Endothelial cell of umbilical vein (primary cell): ENCODE measurements at regions of chr11 and their contacts with region 1.

Region 1: DNA sequence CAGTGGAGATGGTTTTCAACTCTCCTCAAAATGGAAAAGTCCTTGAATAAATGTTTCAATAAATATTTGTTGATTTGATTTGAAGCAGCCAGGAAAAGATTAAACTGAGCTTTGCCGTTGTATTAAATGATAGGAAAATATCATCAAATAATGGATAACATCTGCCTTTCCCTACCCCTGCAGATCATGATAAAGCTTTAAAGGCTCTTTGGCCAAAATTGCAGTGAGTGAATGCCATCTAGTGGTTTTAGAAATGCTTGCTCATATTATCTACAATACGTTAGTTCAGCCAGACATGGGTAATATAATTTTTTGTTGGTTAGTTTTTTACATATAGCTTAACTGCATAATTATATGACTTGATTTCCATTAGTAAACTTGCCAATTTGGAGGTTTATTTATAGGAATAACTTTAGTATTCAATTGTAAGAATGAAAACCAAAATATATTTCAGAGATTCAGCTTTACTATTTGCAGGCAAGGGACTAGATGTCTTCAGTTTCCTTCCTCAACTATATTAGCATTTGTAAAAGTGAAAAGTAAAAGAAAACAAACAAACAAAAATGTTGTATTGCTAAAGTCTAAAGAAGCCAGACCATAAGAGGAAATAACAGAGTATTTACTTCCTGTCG is 159.2 kb downstream of the MSANTD4 start:
- DNase-seq: peak; percentile 73
- H3K4me3 ChIP-seq: no peak overlapping the region
- H3K27ac ChIP-seq: no peak overlapping the region
- H3K4me1 ChIP-seq: no peaks in the 10 kb centered on the region
- H3K27me3 ChIP-seq: peaks cover 0 to 2% of the 10 kb centered on the region in 2 experiments
- CTCF ChIP-seq: peak; percentile 39 to 49
- POLR2A ChIP-seq: no peak

Region 2: DNA sequence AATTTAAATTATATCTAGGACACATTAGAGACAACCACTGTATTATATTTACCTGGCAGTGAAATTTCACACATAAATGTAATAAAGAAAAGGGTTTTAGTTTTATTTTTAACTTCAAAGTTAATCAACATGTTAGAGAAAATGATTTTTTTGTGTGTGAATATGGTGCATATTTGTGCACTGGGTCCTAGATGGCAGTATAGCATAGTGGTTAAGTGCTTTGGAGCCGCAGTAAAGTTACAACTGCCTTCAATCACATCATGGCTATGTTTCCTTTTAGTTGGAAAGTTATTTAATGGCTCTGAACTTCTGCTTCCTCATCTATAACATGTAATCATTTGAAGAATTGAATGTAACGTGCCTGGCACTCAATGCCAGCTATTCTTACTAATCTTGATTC is 1935.3 kb before region 1 on chr11:
- CTCF ChIA-PET with region 1: no interaction called
- POLR2A ChIA-PET with region 1: no interaction called
- dilution Hi-C with region 1: no loop called
- intact Hi-C with region 1: loop called (anchors 10 kb)
- DNase-seq: no peak
- H3K4me3 ChIP-seq: no peak overlapping the region
- H3K27ac ChIP-seq: no peak overlapping the region
- H3K4me1 ChIP-seq: no peaks in the 10 kb centered on the region
- H3K27me3 ChIP-seq: no peaks in the 10 kb centered on the region
- CTCF ChIP-seq: no peak
- POLR2A ChIP-seq: no peak

Region 3: GRCh38 chr11:104254347-104254746 is 1608.5 kb before region 1 on chr11:
- CTCF ChIA-PET with region 1: interaction called, 28 read pairs
- POLR2A ChIA-PET with region 1: no interaction called
- dilution Hi-C with region 1: no loop called
- intact Hi-C with region 1: loop called (anchors 2 kb)
- DNase-seq: peak; percentile 23
- H3K4me3 ChIP-seq: no peak overlapping the region
- H3K27ac ChIP-seq: no peak overlapping the region
- H3K4me1 ChIP-seq: no peaks in the 10 kb centered on the region
- H3K27me3 ChIP-seq: no peaks in the 10 kb centered on the region
- CTCF ChIP-seq: peak; percentile 52 to 62
- POLR2A ChIP-seq: no peak

Region 4: GRCh38 chr11:104823638-104824037 is 1039.2 kb before region 1 on chr11:
- CTCF ChIA-PET with region 1: interaction called, 8 read pairs
- POLR2A ChIA-PET with region 1: no interaction called
- dilution Hi-C with region 1: no loop called
- intact Hi-C with region 1: loop called (anchors 10 kb)
- DNase-seq: peak; percentile 22
- H3K4me3 ChIP-seq: no peak overlapping the region
- H3K27ac ChIP-seq: no peak overlapping the region
- H3K4me1 ChIP-seq: peaks cover 2% of the 10 kb centered on the region
- H3K27me3 ChIP-seq: no peaks in the 10 kb centered on the region
- CTCF ChIP-seq: no peak
- POLR2A ChIP-seq: no peak

Region 5: DNA sequence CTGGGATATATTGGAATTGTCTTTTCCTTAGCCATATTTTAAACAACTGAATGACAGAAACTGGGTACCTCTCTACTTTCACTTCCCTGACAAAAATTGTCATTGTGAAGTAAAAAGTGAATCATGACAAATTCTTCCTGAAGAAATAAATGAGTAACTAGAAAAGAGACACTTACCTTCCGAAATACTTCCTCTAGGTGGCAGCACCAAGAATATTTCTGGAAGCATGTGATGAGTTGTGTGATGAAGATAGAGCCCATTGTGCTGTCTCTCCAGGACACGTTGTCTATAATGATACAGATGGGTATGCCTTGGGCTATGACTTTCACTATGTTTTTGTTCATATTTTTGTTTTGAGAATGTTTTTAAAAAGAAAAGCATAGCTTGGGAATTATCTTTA is 915.9 kb before region 1 on chr11:
- CTCF ChIA-PET with region 1: interaction called, 35 read pairs
- POLR2A ChIA-PET with region 1: no interaction called
- dilution Hi-C with region 1: no loop called
- intact Hi-C with region 1: loop called (anchors 1 kb)
- DNase-seq: peak; percentile 74
- H3K4me3 ChIP-seq: no peak overlapping the region
- H3K27ac ChIP-seq: no peak overlapping the region
- H3K4me1 ChIP-seq: no peaks in the 10 kb centered on the region
- H3K27me3 ChIP-seq: no peaks in the 10 kb centered on the region
- CTCF ChIP-seq: peak; percentile 33 to 35
- POLR2A ChIP-seq: no peak

Region 6: DNA sequence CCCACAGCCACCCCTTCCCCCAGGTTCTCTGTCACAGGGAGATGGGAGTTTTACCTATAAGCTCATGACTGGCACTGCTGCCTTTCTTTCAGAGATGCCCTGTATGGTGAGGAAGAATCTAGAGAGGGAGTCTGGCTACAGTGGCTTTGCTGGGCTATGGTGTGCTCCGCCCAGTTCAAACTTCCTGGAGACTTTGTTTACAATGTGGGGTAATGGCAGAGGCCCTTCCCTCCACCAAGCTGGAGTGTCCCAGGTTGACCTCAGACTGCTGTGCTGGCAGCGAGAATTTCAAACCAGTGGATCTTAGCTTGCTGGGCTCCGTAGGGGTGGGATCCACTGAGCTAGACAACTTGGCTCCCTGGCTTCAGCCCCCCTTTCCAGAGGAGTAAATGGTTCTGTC is 15.7 kb after region 1 on chr11:
- CTCF ChIA-PET with region 1: interaction called, 11 read pairs
- POLR2A ChIA-PET with region 1: no interaction called
- dilution Hi-C with region 1: no loop called
- intact Hi-C with region 1: no loop called
- DNase-seq: no peak
- H3K4me3 ChIP-seq: no peak overlapping the region
- H3K27ac ChIP-seq: no peak overlapping the region
- H3K4me1 ChIP-seq: no peaks in the 10 kb centered on the region
- H3K27me3 ChIP-seq: no peaks in the 10 kb centered on the region
- CTCF ChIP-seq: no peak
- POLR2A ChIP-seq: no peak